ENCODE measurements at regions of chr10 and their contacts with region 1.

Region 1: DNA sequence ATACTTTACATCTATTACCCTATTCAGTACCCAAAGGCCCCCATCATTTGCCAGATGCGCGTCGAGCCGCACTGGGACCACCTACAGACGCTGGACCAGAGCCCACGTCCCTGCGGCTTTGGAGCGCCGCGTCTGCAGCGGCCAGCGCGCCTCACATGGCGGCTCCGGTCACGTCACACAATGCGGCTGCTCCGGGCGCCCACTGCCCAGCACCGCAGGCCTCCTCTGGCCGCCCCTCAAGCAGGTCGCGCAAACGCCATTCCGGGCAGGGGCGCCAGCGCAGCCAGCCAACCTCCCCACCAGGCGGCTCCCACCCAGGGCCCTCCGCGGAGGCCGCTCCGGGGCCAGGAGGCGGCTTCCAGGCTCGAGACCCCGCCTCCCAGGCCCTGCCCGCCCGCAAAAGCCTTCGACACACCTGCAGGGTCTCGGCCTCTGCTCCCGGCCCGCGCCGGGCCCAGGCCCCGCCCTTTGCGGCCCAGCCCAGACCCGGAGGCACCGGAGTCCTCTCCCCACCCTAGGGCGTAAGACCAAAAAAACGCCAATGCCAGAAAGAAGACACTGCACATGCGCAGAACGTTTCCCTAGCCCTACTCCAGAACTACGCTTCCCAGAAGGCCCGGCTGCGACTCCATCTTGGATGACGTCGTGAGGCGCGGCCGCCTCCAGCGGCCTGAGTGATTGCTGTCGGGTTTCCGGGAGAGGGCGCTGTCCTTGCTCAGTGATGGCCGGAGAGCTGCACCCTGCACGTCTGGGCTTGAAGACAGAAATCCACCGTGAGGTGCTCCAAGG is at the start of gene ZNF25:
- DNase-seq: peak; percentile 99
- H3K4me3 ChIP-seq: peak within 1 kb of the TSS; percentile 78 to 96
- H3K27ac ChIP-seq: peak within 1 kb of the TSS; percentile 96 to 99
- H3K4me1 ChIP-seq: no peaks in the 10 kb centered on the region
- H3K27me3 ChIP-seq: no peaks in the 10 kb centered on the region
- CTCF ChIP-seq: peak; percentile 82 to 98 (median 96)
- POLR2A ChIP-seq: peak; percentile 69
- total RNA-seq, gene ZNF25: 9.8 to 13.0 TPM

Region 2: DNA sequence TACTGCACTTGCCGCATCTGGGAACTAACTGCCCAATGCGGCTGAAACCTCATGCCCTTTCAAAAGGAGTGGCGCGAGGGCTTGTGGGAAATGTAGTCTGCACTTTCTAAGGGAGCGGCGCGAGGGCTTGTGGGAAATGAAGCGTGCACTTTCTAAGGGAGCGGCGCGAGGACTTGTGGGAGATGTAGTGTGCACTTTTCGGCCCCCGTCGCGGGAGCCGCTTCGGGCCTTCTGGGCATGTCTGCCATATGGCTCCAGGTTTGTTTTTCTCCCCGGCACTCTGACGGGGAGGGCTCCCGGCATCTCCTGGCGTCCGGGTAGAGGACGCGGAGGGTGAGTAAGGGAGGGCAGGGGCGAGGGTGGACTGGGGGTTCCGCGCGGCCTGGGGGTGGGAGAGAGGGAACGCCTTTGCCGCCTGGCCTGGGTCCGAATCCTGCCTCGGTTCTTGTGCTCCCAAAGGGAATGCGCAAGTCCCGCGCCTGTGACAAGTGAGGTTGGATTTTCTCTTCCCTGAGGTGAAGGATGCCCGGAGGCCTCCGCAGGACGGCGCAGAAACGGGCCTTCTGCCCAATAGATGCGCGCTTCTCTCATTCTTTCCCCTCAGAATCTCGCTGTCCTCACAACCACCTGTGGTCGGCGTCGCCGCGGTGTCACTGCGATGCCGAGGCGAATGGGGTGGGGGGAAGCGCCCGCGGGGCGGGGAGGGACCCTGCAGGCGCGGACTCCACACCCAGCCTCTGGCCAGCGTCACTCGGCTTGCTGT is 118.1 kb after region 1 on chr10 and contains the start of gene ZNF37A:
- intact Hi-C with region 1: loop called (anchors 2 kb)
- DNase-seq: peak; percentile 97
- H3K4me3 ChIP-seq: peak within 1 kb of the TSS; percentile 65 to 73
- H3K27ac ChIP-seq: peak within 1 kb of the TSS; percentile 84 to 86
- H3K4me1 ChIP-seq: no peaks in the 10 kb centered on the region
- H3K27me3 ChIP-seq: no peaks in the 10 kb centered on the region
- CTCF ChIP-seq: peak in 1 of 4 experiments; percentile 23
- POLR2A ChIP-seq: peak; percentile 70
- total RNA-seq, gene ZNF37A: 11.7 to 29.5 TPM